ENCODE measurements at regions of chr3 and their contacts with region 1.

Region 1: GRCh38 chr3:138915503-138916498 is 31.1 kb downstream of the FOXL2 start:
- DNase-seq: peak; percentile 75
- H3K4me3 ChIP-seq: peak overlapping the region; percentile 90
- H3K27ac ChIP-seq: peak overlapping the region; percentile 95
- H3K27me3 ChIP-seq: no peaks in the 10 kb centered on the region
- CTCF ChIP-seq: peak; percentile 76

Region 2: DNA sequence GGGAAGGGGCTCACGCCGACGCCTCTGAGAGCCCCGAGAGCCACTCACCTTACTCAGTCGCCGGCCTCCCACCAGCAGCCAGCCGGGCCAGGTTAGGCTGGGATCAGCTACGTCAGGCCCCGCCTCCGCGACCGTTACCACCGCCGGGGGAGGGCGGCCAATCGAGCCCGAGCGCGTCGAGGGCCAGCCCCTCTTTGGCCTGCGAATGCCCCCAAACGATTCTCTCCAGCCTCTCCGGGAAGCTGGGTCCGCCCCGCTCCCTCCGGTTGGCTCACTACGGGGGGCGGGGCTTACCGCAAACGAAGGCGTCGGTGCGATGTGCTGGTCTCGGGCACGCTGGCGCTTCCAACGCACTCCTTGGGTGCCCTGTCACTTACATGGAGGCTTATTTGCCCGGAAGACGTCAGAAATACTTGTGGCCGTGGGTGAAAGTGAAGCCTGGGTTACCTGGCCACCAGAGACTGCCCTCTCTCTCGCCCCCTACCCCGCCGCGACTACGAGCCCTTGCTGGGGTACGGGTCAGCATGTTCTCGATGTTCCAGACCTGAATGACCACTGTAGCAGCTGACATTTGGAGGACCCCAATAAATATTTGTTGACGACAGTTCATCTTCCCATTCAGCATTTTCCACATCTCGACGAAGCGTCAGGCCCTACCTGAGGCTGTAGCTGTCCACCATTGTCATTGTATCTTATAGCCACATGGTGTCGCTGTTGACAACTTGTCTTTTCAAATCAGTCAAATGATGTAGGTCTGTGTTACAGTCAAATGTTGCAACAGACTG is 321.5 kb before region 1 on chr3 and contains the start of gene CEP70:
- CTCF ChIA-PET with region 1: interaction called, 560 read pairs
- POLR2A ChIA-PET with region 1: interaction called, 15 read pairs
- DNase-seq: peak; percentile 85
- H3K4me3 ChIP-seq: peak within 1 kb of the TSS; percentile 98
- H3K27ac ChIP-seq: peak within 1 kb of the TSS; percentile 75
- H3K27me3 ChIP-seq: no peaks in the 10 kb centered on the region
- CTCF ChIP-seq: peak; percentile 80
- polyA plus RNA-seq, gene CEP70: 9.8 and 14.6 TPM in 2 replicates

Region 3: GRCh38 chr3:138670407-138670806 is 245.4 kb before region 1 on chr3:
- CTCF ChIA-PET with region 1: interaction called, 16 read pairs
- POLR2A ChIA-PET with region 1: no interaction called
- DNase-seq: no peak
- H3K4me3 ChIP-seq: no peak overlapping the region
- H3K27ac ChIP-seq: no peak overlapping the region
- H3K27me3 ChIP-seq: no peaks in the 10 kb centered on the region
- CTCF ChIP-seq: no peak

Region 4: DNA sequence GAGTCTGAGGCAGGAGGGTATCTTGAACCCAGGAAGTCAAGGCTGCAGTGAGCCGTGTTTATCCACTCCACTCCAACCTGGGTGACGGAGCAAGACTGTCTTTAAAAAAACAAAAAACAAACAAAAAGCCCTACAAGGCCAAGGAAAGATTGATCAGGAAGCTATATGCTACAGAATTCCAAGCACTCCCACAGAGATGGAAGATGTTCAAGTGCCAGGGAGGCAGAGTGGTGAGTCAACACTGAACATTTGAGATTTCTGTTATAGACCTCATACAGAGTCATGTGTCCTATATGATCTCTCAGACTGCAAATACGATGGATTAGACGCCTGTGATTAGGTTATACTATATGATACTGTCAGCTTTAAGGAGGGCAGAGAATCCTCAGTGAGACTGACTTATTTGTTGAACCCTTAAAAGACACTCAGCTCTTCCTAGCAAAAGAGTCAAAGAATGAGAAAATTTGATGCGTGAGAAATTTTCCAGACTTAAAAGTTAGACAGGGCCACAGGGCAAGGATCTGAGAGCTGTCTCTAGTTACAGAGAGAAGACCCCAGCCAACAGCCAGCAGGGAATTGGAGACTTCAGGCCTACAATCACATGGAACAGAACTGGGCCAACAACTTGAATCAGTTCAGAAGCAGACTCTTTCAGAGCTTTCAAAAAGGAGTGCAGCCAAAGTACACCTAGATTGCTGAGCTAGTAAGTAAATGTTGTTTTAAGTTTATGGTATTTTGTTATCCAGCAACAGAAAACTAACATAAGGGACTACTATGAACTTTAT is 188.7 kb before region 1 on chr3:
- CTCF ChIA-PET with region 1: interaction called, 18 read pairs
- POLR2A ChIA-PET with region 1: no interaction called
- DNase-seq: peak; percentile 6
- H3K4me3 ChIP-seq: no peak overlapping the region
- H3K27ac ChIP-seq: no peak overlapping the region
- H3K27me3 ChIP-seq: no peaks in the 10 kb centered on the region
- CTCF ChIP-seq: no peak

Region 5: DNA sequence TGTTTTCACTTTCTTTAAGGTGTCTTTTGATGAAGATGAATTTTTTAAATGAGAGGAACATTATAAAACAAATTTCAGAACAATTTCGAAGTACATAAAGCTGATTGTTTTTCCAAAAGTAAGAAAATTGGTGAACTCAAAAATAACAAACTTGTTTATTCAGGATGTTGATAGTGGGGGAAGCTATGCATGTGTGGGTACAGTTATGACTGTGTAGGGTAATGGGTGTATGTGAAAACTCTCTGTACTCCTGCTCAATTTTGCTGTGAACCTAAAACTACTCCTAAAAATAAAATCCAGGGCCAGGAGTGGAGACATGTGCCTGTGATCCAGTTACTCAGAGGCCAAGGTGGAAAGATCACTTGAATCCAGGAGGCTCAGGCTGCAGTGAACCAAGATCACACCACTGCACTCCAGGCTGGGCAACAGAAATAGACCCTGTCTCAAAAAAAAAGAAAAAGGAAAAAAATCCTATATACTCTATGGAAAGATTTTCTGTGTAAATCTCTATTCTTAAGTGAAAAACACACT is 118.2 kb before region 1 on chr3:
- CTCF ChIA-PET with region 1: interaction called, 15 read pairs
- POLR2A ChIA-PET with region 1: no interaction called
- DNase-seq: no peak
- H3K4me3 ChIP-seq: no peak overlapping the region
- H3K27ac ChIP-seq: no peak overlapping the region
- H3K27me3 ChIP-seq: no peaks in the 10 kb centered on the region
- CTCF ChIP-seq: no peak

Region 6: GRCh38 chr3:138862924-138863775 is 52.7 kb before region 1 on chr3:
- CTCF ChIA-PET with region 1: interaction called, 16 read pairs
- POLR2A ChIA-PET with region 1: no interaction called
- DNase-seq: no peak
- H3K4me3 ChIP-seq: no peak overlapping the region
- H3K27ac ChIP-seq: no peak overlapping the region
- H3K27me3 ChIP-seq: no peaks in the 10 kb centered on the region
- CTCF ChIP-seq: no peak

Measured in AG04450 (cell line).